Ovary (tissue), 10 donors: ENCODE measurements at regions of chr6 and their contacts with region 1.

Region 1: GRCh38 chr6:19804205-19805123 is 32.7 kb upstream of the ID4 start:
- DNase-seq: peak; percentile 94 to 98 (median 97)
- H3K4me3 ChIP-seq: peak overlapping the region; percentile 45
- H3K27ac ChIP-seq: peak overlapping the region in 1 of 2 donors; percentile 80
- H3K4me1 ChIP-seq: peaks cover 5% of the 10 kb centered on the region
- H3K27me3 ChIP-seq: no peaks in the 10 kb centered on the region
- CTCF ChIP-seq: peak in 1 of 3 donors; percentile 12
- EP300 ChIP-seq: peak; percentile 67
- POLR2A ChIP-seq: peak; percentile 58

Region 2: GRCh38 chr6:19836799-19837510 is 32.5 kb after region 1 on chr6 and contains the start of gene ID4:
- intact Hi-C with region 1: loop called in 1 of 4 experiments (anchors 5 kb)
- DNase-seq: peak; percentile 87 to 96 (median 95)
- H3K4me3 ChIP-seq: peak within 1 kb of the TSS; percentile 91
- H3K27ac ChIP-seq: peak within 1 kb of the TSS; percentile 65 to 88
- H3K4me1 ChIP-seq: no peaks in the 10 kb centered on the region
- H3K27me3 ChIP-seq: no peaks in the 10 kb centered on the region
- CTCF ChIP-seq: no peak
- EP300 ChIP-seq: no peak
- POLR2A ChIP-seq: peak; percentile 93
- total RNA-seq, gene ID4: 9.9 to 169 (median 49.2) TPM